Left colon (tissue), 2 donors: ENCODE measurements at regions of chr6 and their contacts with region 1.

Region 1: DNA sequence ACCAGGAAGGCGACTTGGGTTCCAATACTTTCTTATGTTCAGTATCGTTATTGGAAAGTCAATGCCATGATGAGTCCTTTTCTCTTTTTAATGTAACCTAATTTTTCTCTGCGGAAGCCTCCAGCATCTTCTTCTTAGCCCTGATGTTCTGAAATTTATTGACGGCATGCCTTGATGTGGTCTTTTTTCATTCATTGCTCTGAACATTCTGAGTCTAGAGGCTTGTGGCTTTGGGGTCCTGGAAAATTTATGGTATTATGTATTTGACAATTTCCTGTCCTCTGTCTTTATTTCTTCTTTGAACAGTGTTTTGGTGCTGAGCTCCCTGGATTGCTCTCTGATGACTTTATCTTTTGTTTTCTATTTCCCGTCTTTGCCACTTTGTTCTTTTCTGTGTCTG is 28.7 kb upstream of the MAS1 start:
- DNase-seq: no peak
- ATAC-seq: no peak

Region 2: GRCh38 chr6:159941286-159942113 is 79.4 kb after region 1 on chr6:
- intact Hi-C with region 1: loop called in 1 of 2 experiments (anchors 10 kb)
- DNase-seq: no peak
- ATAC-seq: peak; percentile 45